ENCODE measurements at regions of chr16 and their contacts with region 1.

Region 1: DNA sequence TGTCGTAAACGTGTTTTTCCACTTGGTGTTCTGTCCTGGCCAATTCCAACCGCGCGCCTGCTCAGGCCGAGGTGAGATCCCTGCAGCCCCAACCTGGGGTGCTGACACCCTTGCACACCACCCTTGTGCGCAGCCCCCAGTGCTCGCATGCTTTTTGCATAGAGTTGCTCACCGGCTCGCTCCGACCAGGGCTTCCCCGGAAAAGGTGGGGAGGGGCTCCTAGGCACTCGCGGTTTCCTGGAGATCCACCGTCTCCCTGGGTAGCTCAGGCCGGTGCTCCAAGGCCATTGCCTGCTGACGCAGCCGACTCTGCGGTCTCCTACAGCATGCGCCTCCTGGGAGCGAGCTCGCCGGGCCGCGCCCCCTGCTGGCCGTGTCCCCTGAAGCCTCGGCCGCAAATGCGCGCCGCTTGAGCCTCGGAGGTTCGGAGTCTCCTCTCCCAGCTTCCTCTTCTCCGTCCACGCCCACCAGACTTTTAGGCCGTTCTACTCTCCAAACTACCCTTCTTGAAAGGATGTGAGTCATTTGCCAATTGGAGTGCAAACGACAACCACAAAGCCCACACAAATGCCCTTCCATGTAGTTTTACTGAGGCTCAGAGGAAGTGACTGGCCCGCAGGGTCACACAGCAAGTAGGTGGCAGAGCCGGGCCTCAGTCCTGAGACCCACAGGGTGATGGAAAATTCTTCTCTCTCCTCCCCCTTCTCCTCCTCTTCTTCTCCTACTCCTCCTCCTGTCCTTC is 7.2 kb upstream of the PDP2 start:
- DNase-seq: peak; percentile 96
- H3K4me3 Mint-ChIP-seq: peak overlapping the region; percentile 72
- H3K27ac Mint-ChIP-seq: peak overlapping the region; percentile 82
- H3K4me1 Mint-ChIP-seq: peaks cover 50% of the 10 kb centered on the region
- H3K27me3 Mint-ChIP-seq: no peaks in the 10 kb centered on the region

Region 2: DNA sequence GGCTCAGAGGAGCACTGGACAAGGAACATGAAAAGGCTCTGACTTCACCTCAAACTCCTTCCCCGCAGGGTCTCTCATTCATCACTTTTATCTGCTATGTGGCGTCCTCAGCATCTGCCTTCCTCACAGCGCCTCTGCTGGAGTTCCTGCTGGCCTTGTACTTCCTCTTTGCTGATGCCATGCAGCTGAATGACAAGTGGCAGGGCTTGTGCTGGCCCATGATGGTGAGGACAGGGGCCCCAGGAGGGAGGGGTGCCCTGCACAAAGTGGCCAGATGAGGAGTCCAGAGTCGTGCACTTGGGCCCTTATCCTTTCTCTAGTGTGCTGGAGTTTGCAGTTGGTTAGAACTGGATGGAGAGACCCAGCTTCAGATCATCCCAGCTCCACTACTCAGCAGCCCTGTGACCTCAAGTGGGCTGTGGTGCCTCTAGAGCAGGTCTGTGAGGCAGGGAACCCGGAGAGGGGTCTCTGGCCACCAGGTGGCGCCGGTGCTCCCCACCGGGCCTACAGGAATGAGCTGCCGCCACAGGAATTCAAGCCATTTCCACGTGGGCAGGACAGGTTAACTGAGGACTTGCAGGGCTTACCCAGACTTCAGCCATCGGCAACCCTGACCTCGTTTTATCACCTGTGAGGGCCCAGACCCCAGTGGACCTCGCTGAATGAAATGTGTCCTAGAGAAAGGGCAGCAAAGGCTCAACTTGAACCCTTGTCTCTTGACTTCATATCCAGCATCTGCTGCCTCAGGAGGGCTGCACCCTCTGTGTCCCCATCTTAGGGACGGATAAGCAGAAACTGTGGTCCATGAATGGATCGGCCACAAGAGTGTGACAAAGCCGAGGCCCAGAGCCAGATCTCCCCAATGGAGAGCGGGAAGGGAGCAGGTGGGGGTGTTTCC is 264.6 kb before region 1 on chr16:
- CTCF ChIA-PET with region 1: interaction called, 16 read pairs
- POLR2A ChIA-PET with region 1: interaction called, 4 read pairs
- DNase-seq: peak; percentile 82
- H3K4me3 Mint-ChIP-seq: peak overlapping the region; percentile 17
- H3K27ac Mint-ChIP-seq: peak overlapping the region; percentile 75
- H3K4me1 Mint-ChIP-seq: peaks cover 44% of the 10 kb centered on the region
- H3K27me3 Mint-ChIP-seq: no peaks in the 10 kb centered on the region

Region 3: GRCh38 chr16:66751303-66751991 is 121.7 kb before region 1 on chr16 and contains the start of gene DYNC1LI2:
- CTCF ChIA-PET with region 1: interaction called, 13 read pairs
- POLR2A ChIA-PET with region 1: interaction called, 5 read pairs
- DNase-seq: peak; percentile 82
- H3K4me3 Mint-ChIP-seq: peak within 1 kb of the TSS; percentile 81
- H3K27ac Mint-ChIP-seq: peak within 1 kb of the TSS; percentile 73
- H3K4me1 Mint-ChIP-seq: peaks cover 42% of the 10 kb centered on the region
- H3K27me3 Mint-ChIP-seq: peaks cover 15% of the 10 kb centered on the region
- total RNA-seq, gene DYNC1LI2: 50.1 to 52.9 TPM

Region 4: DNA sequence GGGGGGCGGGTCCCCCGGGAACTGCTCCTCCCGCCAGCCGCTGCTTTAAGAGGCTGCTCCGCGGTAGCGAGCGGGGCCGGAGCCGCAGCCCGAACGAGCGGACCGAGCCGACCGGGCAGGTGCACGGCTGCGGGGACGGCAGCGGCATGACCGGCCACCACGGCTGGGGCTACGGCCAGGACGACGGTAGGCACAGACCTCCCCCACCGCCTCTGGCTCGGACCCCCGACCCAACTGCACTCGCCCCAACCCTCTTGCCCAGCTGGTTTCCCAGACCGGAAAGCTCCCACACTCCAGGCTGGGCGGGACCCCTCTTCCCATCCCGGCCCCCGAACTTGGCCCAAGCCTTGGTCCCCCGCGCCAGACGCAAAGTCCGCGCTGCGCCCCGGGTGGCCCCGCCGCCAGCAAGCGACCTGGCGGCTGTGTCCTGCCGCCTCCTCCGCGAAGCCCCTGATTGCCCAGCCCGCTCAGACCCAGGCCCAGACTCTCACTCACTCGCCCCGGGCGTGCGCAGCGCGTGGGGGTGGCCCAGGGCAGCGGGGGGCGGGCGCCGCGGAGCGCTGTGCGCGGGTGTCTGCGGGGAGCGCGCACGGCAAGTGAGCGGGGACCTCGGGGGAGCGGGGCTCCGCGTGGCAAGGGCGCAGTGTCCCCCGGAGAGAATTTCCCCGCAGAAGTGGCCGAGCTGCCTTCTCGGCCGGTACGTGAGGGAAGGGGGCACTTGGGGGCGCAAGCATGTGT is 28.6 kb before region 1 on chr16 and contains the start of gene CA7:
- CTCF ChIA-PET with region 1: interaction called, 32 read pairs
- POLR2A ChIA-PET with region 1: interaction called, 3 read pairs
- DNase-seq: no peak
- H3K4me3 Mint-ChIP-seq: no peak within 1 kb of the TSS
- H3K27ac Mint-ChIP-seq: no peak within 1 kb of the TSS
- H3K4me1 Mint-ChIP-seq: peaks cover 20% of the 10 kb centered on the region
- H3K27me3 Mint-ChIP-seq: peaks cover 41% of the 10 kb centered on the region
- total RNA-seq, gene CA7: 0.13 TPM in 1 of 2 experiments, not detected in the other

Region 5: GRCh38 chr16:66894948-66895688 is 22.0 kb after region 1 on chr16:
- CTCF ChIA-PET with region 1: interaction called, 22 read pairs
- POLR2A ChIA-PET with region 1: interaction called, 5 read pairs
- DNase-seq: peak; percentile 76
- H3K4me3 Mint-ChIP-seq: no peak overlapping the region
- H3K27ac Mint-ChIP-seq: no peak overlapping the region
- H3K4me1 Mint-ChIP-seq: peaks cover 24% of the 10 kb centered on the region
- H3K27me3 Mint-ChIP-seq: no peaks in the 10 kb centered on the region

Region 6: GRCh38 chr16:66934153-66934838 is 61.2 kb after region 1 on chr16 and contains the start of gene CIAO2B:
- CTCF ChIA-PET with region 1: interaction called, 5 read pairs
- POLR2A ChIA-PET with region 1: interaction called, 11 read pairs
- DNase-seq: peak; percentile 90
- H3K4me3 Mint-ChIP-seq: peak within 1 kb of the TSS; percentile 98
- H3K27ac Mint-ChIP-seq: peak within 1 kb of the TSS; percentile 94
- H3K4me1 Mint-ChIP-seq: peaks cover 57% of the 10 kb centered on the region
- H3K27me3 Mint-ChIP-seq: no peaks in the 10 kb centered on the region
- total RNA-seq, gene CIAO2B: 116 to 121 TPM

Measured in activated CD4-positive, alpha-beta memory T cell treated with anti-CD3 and anti-CD28 coated beads, Interleukin-2, amount 10 ng/mL, durations not matched to agents 7 days and 5 days (primary cell).